ENCODE measurements at regions of chr1 and their contacts with region 1.

Region 1: GRCh38 chr1:73821520-73821919 is 376.5 kb downstream of the LRRIQ3 start:
- DNase-seq: no peak
- H3K4me3 ChIP-seq: no peak overlapping the region
- H3K27ac ChIP-seq: no peak overlapping the region
- H3K4me1 ChIP-seq: no peaks in the 10 kb centered on the region
- H3K27me3 ChIP-seq: no peaks in the 10 kb centered on the region
- CTCF ChIP-seq: no peak

Region 2: DNA sequence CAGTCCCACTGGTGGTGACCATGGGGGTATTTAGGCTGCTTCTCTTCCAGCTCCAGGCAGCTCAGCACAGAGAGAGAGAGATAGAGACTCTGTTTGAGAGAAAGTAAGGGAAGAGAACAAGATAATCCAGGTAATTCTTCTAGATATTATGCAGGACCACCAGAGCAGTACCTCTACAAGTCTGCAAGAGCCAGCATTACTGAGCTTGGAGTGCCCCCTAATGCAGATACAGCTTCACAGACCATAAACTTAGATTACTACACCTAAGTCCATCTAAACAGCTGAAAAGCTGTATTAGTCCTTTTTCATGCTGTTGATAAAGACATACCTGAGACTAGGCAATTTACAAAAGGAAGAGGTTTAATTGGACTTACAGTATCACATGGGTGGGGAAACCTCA is 193.8 kb before region 1 on chr1:
- CTCF ChIA-PET with region 1: no interaction called
- dilution Hi-C with region 1: no loop called
- in situ Hi-C with region 1: no loop called
- intact Hi-C with region 1: no loop called
- DNase-seq: no peak
- H3K4me3 ChIP-seq: no peak overlapping the region
- H3K27ac ChIP-seq: no peak overlapping the region
- H3K4me1 ChIP-seq: no peaks in the 10 kb centered on the region
- H3K27me3 ChIP-seq: peaks cover 2% of the 10 kb centered on the region
- CTCF ChIP-seq: no peak

Region 3: DNA sequence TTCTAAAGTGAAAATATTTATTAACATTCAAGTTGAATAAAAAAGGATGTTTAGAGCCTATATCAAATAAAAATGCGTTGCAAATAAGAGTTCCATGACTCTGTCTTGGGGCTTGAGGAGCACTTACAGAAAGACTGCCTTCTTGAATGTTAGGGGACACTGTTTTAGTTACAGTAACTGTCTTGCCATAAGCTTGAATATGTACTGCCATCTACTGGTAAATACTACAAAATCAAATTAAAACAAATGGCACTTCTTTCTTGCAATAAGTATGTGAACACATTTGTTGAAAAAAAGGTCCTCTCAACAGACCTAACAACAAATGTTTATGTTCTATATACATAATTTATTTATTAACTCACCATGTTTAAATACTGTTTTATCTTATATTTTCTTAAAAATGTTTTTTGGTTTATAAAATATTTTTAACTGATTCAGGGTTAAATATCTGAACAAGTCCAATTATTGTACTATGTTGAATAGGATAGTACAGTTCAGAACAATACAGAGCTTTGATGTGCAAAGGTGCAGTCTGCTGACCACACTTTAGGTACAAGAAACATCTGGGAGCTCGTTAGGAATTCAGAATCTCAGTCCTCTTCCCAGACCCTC is 176.9 kb after region 1 on chr1:
- CTCF ChIA-PET with region 1: no interaction called
- dilution Hi-C with region 1: loop called (anchors 10 kb)
- in situ Hi-C with region 1: loop called in 1 of 2 experiments (anchors 25 kb)
- intact Hi-C with region 1: no loop called
- DNase-seq: peak; percentile 28
- H3K4me3 ChIP-seq: no peak overlapping the region
- H3K27ac ChIP-seq: no peak overlapping the region
- H3K4me1 ChIP-seq: no peaks in the 10 kb centered on the region
- H3K27me3 ChIP-seq: no peaks in the 10 kb centered on the region
- CTCF ChIP-seq: peak; percentile 44 to 50

Region 4: GRCh38 chr1:74737360-74737759 is 915.8 kb after region 1 on chr1:
- CTCF ChIA-PET with region 1: no interaction called
- dilution Hi-C with region 1: no loop called
- in situ Hi-C with region 1: no loop called
- intact Hi-C with region 1: no loop called
- DNase-seq: no peak
- H3K4me3 ChIP-seq: no peak overlapping the region
- H3K27ac ChIP-seq: no peak overlapping the region
- H3K4me1 ChIP-seq: peaks cover 8% of the 10 kb centered on the region
- H3K27me3 ChIP-seq: no peaks in the 10 kb centered on the region
- CTCF ChIP-seq: no peak